Activated T-helper 1 cell treated with anti-CD3 and anti-CD28 coated beads, Interleukin-12 subunit alpha, Interleukin-12 subunit beta, Interleukin-2, Interleukin-4 antibody, amounts not matched to agents 30 ng/mL and 10 ng/mL and 1 ng/mL, durations not matched to agents 14 hours and 24 hours and 36 hours (primary cell): ENCODE measurements at regions of chr12 and their contacts with region 1.

Region 1: DNA sequence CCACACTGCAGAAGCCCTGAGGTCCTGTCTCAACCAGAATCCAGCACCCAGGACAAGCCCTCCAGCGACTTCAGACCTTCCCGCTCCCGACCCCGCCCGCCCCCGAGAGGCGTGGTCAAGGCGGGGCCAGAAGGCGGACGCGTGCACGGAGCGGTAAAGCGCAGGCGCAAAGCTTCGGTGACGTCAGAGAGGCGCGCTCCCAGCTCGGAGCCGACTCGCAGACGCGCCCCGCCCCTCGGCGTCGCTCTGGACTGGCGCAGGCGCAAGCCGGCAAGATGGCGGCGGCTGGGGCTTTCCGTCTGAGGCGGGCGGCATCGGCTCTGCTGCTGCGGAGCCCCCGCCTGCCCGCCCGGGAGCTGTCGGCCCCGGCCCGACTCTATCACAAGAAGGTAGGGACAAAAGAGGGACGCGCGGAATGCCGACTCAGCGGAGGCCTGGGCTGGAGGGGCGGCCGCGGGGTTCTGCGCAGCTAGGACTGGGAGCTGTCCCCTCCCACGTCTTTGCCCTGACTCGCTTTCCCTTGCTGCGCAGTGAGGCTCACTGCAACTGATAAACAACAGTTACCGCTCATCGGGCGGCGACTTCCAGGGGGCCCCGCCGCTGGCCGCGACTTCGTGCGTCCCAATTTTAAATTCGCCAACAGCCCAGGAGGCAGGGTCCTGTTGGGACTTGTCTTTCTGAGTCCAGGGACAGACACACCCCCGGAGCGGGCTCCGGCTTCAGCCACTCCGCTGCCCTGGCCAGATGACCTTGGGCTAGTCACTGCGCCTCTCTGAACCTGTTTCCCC is at the start of gene ISCU:
- DNase-seq: peak; percentile 99
- H3K4me3 Mint-ChIP-seq: peak within 1 kb of the TSS; percentile 100
- H3K27ac Mint-ChIP-seq: peak within 1 kb of the TSS; percentile 99
- H3K4me1 Mint-ChIP-seq: peaks cover 58% of the 10 kb centered on the region
- H3K27me3 Mint-ChIP-seq: no peaks in the 10 kb centered on the region
- total RNA-seq, gene ISCU: 73.8 and 74.9 TPM in 2 replicates

Region 2: DNA sequence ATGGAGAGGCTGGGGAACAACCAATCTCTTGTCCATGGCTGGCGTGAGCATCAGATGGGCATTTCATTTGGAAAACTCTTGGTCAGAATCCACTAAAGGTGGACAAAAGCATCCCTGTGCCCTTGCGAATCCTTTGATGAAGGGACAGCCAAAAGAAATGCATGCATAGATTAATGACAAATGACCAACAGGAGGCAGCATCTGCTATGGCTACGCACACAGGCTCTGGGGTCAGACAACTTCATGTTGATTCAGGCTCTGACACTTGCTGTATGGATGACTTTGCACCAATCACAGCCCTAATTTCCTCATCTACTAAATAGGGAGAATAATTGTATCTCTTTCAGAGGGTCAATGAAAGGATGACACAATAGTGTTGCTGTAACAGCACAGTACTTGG is 670.6 kb before region 1 on chr12:
- intact Hi-C with region 1: no loop called
- DNase-seq: no peak
- H3K4me3 Mint-ChIP-seq: no peak overlapping the region
- H3K27ac Mint-ChIP-seq: no peak overlapping the region
- H3K4me1 Mint-ChIP-seq: no peaks in the 10 kb centered on the region
- H3K27me3 Mint-ChIP-seq: peaks cover 2% of the 10 kb centered on the region

Region 3: DNA sequence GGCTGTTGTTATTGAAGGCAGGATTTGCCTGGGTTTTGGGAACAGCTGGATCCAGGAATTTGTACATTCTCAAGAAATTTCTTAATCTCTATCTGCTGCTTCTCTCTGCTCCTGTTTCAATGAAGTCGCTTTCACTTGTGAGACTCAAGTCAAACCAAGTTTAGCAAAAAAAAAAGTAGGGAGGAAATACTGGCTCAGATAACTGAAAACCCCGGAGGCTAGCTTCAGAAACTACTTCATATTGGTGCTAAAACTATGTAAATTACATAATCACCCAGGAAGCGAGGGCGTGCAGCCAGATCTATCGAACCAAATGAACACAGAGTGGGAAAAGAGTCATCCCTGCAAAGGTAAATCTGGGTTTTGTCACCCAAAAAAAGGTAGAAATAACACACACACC is 115.8 kb before region 1 on chr12:
- intact Hi-C with region 1: no loop called
- DNase-seq: no peak
- H3K4me3 Mint-ChIP-seq: no peak overlapping the region
- H3K27ac Mint-ChIP-seq: no peak overlapping the region
- H3K4me1 Mint-ChIP-seq: no peaks in the 10 kb centered on the region
- H3K27me3 Mint-ChIP-seq: peaks cover 4% of the 10 kb centered on the region

Region 4: GRCh38 chr12:108618079-108618952 is 55.8 kb after region 1 on chr12:
- intact Hi-C with region 1: loop called (anchors 1 kb)
- DNase-seq: peak; percentile 69
- H3K4me3 Mint-ChIP-seq: no peak overlapping the region
- H3K27ac Mint-ChIP-seq: peak overlapping the region; percentile 57
- H3K4me1 Mint-ChIP-seq: peaks cover 57% of the 10 kb centered on the region
- H3K27me3 Mint-ChIP-seq: peaks cover 2% of the 10 kb centered on the region

Region 5: DNA sequence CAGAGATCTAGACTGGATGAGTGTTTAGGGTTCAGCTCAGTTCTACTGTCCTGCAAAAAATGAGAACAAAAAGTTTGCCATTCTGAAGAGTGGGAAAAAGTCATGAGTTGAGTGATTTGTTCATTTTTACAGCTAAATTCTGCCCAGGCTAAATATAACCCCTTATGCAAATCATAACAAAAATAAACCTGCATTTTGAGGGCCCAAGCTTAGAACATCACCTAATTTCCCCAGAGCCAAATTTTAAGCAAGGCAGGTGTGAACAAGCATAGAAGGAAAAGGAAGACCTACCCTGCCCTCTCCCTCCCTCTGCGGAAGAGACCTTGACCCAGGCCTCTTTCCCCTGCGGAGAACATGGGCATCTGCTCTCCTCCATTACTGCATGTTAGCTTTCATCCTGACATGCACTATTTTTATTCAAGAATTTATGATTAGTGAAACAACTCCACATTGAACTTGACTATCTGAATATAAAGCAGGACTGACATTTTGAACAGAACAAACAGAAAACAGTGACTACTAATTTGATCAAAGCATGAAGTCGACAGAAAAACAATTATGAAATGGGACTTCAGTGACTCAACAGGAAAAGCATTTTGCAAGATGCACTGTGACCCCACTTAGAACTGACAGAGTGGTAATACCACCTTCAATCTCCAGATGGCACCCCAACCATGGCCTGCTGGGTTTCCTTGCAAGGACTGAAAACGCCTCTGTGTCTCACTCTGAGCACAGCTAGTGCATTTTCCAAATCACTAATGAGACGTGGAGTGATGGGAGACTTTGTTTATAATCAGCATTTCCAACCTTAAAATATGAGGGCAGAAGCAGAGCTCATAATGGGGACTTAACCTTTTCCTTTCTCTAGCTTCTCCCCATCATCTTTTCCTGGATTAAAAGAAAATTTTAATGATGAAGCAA is 102.1 kb after region 1 on chr12:
- intact Hi-C with region 1: loop called (anchors 1 kb)
- DNase-seq: peak; percentile 79
- H3K4me3 Mint-ChIP-seq: no peak overlapping the region
- H3K27ac Mint-ChIP-seq: peak overlapping the region; percentile 72
- H3K4me1 Mint-ChIP-seq: peaks cover 17% of the 10 kb centered on the region
- H3K27me3 Mint-ChIP-seq: no peaks in the 10 kb centered on the region

Region 6: GRCh38 chr12:108731105-108731865 is 168.7 kb after region 1 on chr12 and contains the start of gene CORO1C:
- intact Hi-C with region 1: loop called (anchors 1 kb)
- DNase-seq: peak; percentile 96
- H3K4me3 Mint-ChIP-seq: peak within 1 kb of the TSS; percentile 89
- H3K27ac Mint-ChIP-seq: peak within 1 kb of the TSS; percentile 94
- H3K4me1 Mint-ChIP-seq: peaks cover 38% of the 10 kb centered on the region
- H3K27me3 Mint-ChIP-seq: peaks cover 16% of the 10 kb centered on the region
- total RNA-seq, gene CORO1C: 46.1 and 49.7 TPM in 2 replicates

Region 7: GRCh38 chr12:109052414-109053323 is 490.1 kb after region 1 on chr12 and contains the start of gene USP30:
- intact Hi-C with region 1: loop called (anchors 1 kb)
- DNase-seq: peak; percentile 77
- H3K4me3 Mint-ChIP-seq: peak within 1 kb of the TSS; percentile 92
- H3K27ac Mint-ChIP-seq: peak within 1 kb of the TSS; percentile 92
- H3K4me1 Mint-ChIP-seq: peaks cover 19% of the 10 kb centered on the region
- H3K27me3 Mint-ChIP-seq: no peaks in the 10 kb centered on the region
- total RNA-seq, gene USP30: 9.0 and 10.5 TPM in 2 replicates

Region 8: GRCh38 chr12:109477185-109477962 is 914.8 kb after region 1 on chr12 and contains the starts of genes KCTD10 and UBE3B:
- intact Hi-C with region 1: no loop called
- DNase-seq: peak; percentile 84
- H3K4me3 Mint-ChIP-seq: peak within 1 kb of the TSS; percentile 94
- H3K27ac Mint-ChIP-seq: peak within 1 kb of the TSS; percentile 98
- H3K4me1 Mint-ChIP-seq: peaks cover 40% of the 10 kb centered on the region
- H3K27me3 Mint-ChIP-seq: no peaks in the 10 kb centered on the region
- total RNA-seq, gene KCTD10: 48.3 and 51.2 TPM in 2 replicates
- total RNA-seq, gene UBE3B: 28.7 and 29.3 TPM in 2 replicates